ENCODE measurements at regions of chr1 and their contacts with region 1.

Region 1: GRCh38 chr1:223726380-223727001 is 14.2 kb downstream of the CAPN2 start:
- DNase-seq: peak; percentile 59 to 96 (median 85)
- ATAC-seq: peak; percentile 95
- H3K4me3 ChIP-seq: no peak overlapping the region
- H3K4me3 Mint-ChIP-seq: peak overlapping the region; percentile 70
- H3K27ac ChIP-seq: peak overlapping the region; percentile 21 to 92
- H3K27ac Mint-ChIP-seq: peak overlapping the region; percentile 88
- H3K4me1 ChIP-seq: peaks cover 35% of the 10 kb centered on the region
- H3K4me1 Mint-ChIP-seq: peaks cover 58% of the 10 kb centered on the region
- H3K27me3 ChIP-seq: no peaks in the 10 kb centered on the region
- H3K27me3 Mint-ChIP-seq: no peaks in the 10 kb centered on the region
- CTCF ChIP-seq: no peak

Region 2: DNA sequence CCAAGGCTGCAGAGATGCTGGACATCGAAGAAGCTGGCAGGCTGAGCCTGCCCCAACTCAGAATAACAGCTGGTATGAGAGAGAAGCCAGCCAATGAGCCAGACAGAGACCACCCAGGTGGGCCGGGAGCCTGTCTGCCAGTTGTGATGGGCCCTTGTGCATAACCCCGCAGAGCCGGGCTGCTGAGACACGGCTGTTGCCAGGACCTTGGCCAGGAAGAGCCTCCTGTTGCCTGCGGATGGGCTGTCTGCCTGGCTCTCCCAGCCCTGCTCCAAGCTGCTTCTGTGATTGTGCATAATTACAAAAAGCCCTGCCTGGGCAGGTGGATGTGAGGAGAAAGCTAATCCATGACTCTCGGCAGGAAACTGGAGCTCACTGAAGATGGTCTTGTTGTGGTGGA is 187.5 kb before region 1 on chr1:
- CTCF ChIA-PET with region 1: no interaction called
- POLR2A ChIA-PET with region 1: no interaction called
- intact Hi-C with region 1: no loop called
- DNase-seq: no peak
- ATAC-seq: no peak
- H3K4me3 ChIP-seq: no peak overlapping the region
- H3K4me3 Mint-ChIP-seq: no peak overlapping the region
- H3K27ac ChIP-seq: no peak overlapping the region
- H3K27ac Mint-ChIP-seq: no peak overlapping the region
- H3K4me1 ChIP-seq: no peaks in the 10 kb centered on the region
- H3K4me1 Mint-ChIP-seq: no peaks in the 10 kb centered on the region
- H3K27me3 ChIP-seq: no peaks in the 10 kb centered on the region
- H3K27me3 Mint-ChIP-seq: peaks cover 7% of the 10 kb centered on the region
- CTCF ChIP-seq: no peak

Region 3: DNA sequence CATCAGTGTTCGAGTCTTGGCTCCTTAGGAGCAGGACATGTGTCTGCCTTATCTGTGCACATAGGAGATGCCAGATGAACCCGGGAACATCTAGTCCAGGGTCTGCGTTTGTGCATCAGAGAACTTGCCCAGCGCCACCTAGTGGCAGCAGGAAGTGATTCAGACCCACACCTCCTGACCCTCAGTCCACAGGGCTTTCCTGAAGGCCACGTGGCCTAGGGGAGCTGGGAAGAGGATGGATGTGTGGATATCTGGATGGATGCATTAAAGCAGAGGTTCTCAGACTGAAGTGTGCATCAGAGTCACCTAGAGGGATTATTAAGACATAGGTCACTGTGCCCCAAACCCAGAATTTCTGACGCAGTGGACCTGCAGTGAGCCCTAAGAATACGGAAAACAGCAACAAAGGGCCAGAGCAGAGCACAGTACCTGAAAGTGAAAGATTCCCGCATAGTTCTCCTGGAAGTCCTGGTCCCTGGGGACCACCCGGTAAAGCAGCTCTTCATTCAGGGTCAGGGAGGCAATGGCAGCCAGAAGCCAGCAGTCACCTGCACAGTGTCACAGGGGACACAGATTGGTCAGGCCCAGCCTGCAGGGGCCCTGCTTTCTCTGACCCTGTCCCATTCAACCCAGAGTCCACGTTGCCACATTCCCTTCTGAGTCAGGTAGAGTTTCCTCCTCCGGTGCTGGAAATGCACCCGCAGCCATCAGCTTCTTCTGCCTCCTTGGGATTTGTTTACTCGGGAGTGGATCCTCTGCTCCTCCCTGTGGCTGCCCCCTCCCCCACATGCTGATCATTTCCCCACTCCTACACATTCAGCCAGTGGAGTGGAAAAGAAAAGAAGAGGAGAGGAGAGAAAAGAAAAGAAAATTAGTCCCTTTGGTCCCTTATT is 98.0 kb before region 1 on chr1:
- CTCF ChIA-PET with region 1: no interaction called
- POLR2A ChIA-PET with region 1: no interaction called
- intact Hi-C with region 1: no loop called
- DNase-seq: peak in 7 of 9 experiments; percentile 16 to 60 (median 42)
- ATAC-seq: no peak
- H3K4me3 ChIP-seq: no peak overlapping the region
- H3K4me3 Mint-ChIP-seq: no peak overlapping the region
- H3K27ac ChIP-seq: no peak overlapping the region
- H3K27ac Mint-ChIP-seq: no peak overlapping the region
- H3K4me1 ChIP-seq: no peaks in the 10 kb centered on the region
- H3K4me1 Mint-ChIP-seq: no peaks in the 10 kb centered on the region
- H3K27me3 ChIP-seq: peaks cover 0 to 2% of the 10 kb centered on the region in 2 experiments
- H3K27me3 Mint-ChIP-seq: peaks cover 10% of the 10 kb centered on the region
- CTCF ChIP-seq: peak; percentile 58

Region 4: GRCh38 chr1:223712194-223712849 is 14.2 kb before region 1 on chr1 and contains the start of gene CAPN2:
- CTCF ChIA-PET with region 1: interaction called, 6 read pairs
- POLR2A ChIA-PET with region 1: interaction called, 6 read pairs
- intact Hi-C with region 1: loop called (anchors 1 kb)
- DNase-seq: peak; percentile 20 to 83 (median 58)
- ATAC-seq: peak; percentile 49
- H3K4me3 ChIP-seq: peak within 1 kb of the TSS; percentile 64 to 81
- H3K4me3 Mint-ChIP-seq: peak within 1 kb of the TSS; percentile 90
- H3K27ac ChIP-seq: peak within 1 kb of the TSS; percentile 62 to 85
- H3K27ac Mint-ChIP-seq: peak within 1 kb of the TSS; percentile 93
- H3K4me1 ChIP-seq: peaks cover 57% of the 10 kb centered on the region
- H3K4me1 Mint-ChIP-seq: peaks cover 56% of the 10 kb centered on the region
- H3K27me3 ChIP-seq: no peaks in the 10 kb centered on the region
- H3K27me3 Mint-ChIP-seq: no peaks in the 10 kb centered on the region
- CTCF ChIP-seq: peak; percentile 50
- total RNA-seq, gene CAPN2: 83.0 to 84.7 TPM

Region 5: GRCh38 chr1:224623743-224624333 is 897.3 kb after region 1 on chr1:
- CTCF ChIA-PET with region 1: no interaction called
- POLR2A ChIA-PET with region 1: no interaction called
- intact Hi-C with region 1: loop called in 1 of 2 experiments (anchors 5 kb)
- DNase-seq: peak; percentile 53 to 95 (median 78)
- ATAC-seq: peak; percentile 85
- H3K4me3 ChIP-seq: peak overlapping the region in 1 of 2 experiments; percentile 28
- H3K4me3 Mint-ChIP-seq: peak overlapping the region; percentile 70
- H3K27ac ChIP-seq: peak overlapping the region; percentile 52 to 76
- H3K27ac Mint-ChIP-seq: peak overlapping the region; percentile 88
- H3K4me1 ChIP-seq: peaks cover 24% of the 10 kb centered on the region
- H3K4me1 Mint-ChIP-seq: peaks cover 28% of the 10 kb centered on the region
- H3K27me3 ChIP-seq: no peaks in the 10 kb centered on the region
- H3K27me3 Mint-ChIP-seq: peaks cover 26% of the 10 kb centered on the region
- CTCF ChIP-seq: no peak